Naive thymus-derived CD8-positive, alpha-beta T cell (primary cell): ENCODE measurements at regions of chr10 and their contacts with region 1.

Region 1: GRCh38 chr10:3785257-3785850 is 345 bp upstream of the KLF6 start:
- DNase-seq: peak; percentile 98 to 100 (median 100)
- ATAC-seq: peak; percentile 67 to 76
- H3K4me3 Mint-ChIP-seq: peak overlapping the region; percentile 84 to 100 (median 95)
- H3K27ac Mint-ChIP-seq: peak overlapping the region; percentile 94 to 99 (median 98)
- H3K4me1 Mint-ChIP-seq: peaks cover 28 to 50% (median 31%) of the 10 kb centered on the region in 4 donors
- H3K27me3 Mint-ChIP-seq: no peaks in the 10 kb centered on the region

Region 2: GRCh38 chr10:3750006-3750816 is 35.1 kb before region 1 on chr10:
- POLR2A ChIA-PET with region 1: no interaction called
- DNase-seq: no peak
- ATAC-seq: no peak
- H3K4me3 Mint-ChIP-seq: no peak overlapping the region
- H3K27ac Mint-ChIP-seq: no peak overlapping the region
- H3K4me1 Mint-ChIP-seq: peaks cover 0 to 10% (median 2%) of the 10 kb centered on the region in 4 donors
- H3K27me3 Mint-ChIP-seq: peaks cover 0 to 4% (median 0%) of the 10 kb centered on the region in 5 donors

Region 3: GRCh38 chr10:3797750-3798149 is 12.4 kb after region 1 on chr10:
- POLR2A ChIA-PET with region 1: interaction called, 71 read pairs
- DNase-seq: no peak
- ATAC-seq: no peak
- H3K4me3 Mint-ChIP-seq: no peak overlapping the region
- H3K27ac Mint-ChIP-seq: peak overlapping the region in 2 of 10 donors; percentile 38 to 74
- H3K4me1 Mint-ChIP-seq: peaks cover 0 to 17% (median 10%) of the 10 kb centered on the region in 4 donors
- H3K27me3 Mint-ChIP-seq: no peaks in the 10 kb centered on the region

Region 4: DNA sequence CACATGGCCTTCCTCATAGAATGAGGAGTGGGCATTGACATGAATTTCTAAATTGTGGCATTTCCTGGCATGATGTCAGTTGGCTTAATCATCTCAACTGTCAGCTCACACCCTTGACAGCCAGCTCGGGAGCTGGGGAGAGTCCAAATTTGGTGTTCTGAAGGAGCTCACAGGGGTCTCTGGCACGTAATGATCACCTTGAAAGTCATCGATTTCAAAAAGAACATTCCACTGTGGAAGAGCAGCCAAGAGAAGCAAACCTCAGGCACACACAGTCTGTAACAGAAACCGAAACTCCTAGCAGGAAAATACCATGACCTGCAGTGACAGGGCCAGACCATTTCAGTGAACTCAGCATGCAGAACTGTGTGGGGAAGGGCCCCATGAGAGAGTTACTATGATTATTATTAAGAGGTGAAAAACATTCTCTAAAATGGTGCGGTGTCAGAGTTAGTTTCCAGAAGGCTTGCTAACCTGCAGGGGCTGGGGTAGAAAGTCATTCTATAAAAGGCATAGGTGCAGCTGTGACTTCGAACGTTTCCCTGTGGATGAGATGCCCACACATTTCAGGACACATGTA is 26.0 kb after region 1 on chr10:
- POLR2A ChIA-PET with region 1: interaction called, 222 read pairs
- DNase-seq: peak in 1 of 10 donors; percentile 25
- ATAC-seq: peak; percentile 29 to 43
- H3K4me3 Mint-ChIP-seq: peak overlapping the region in 9 of 10 donors; percentile 49 to 79 (median 55)
- H3K27ac Mint-ChIP-seq: peak overlapping the region in 8 of 10 donors; percentile 36 to 92 (median 72)
- H3K4me1 Mint-ChIP-seq: peaks cover 20 to 58% (median 45%) of the 10 kb centered on the region in 4 donors
- H3K27me3 Mint-ChIP-seq: no peaks in the 10 kb centered on the region

Region 5: GRCh38 chr10:3836222-3836820 is 51.0 kb after region 1 on chr10:
- POLR2A ChIA-PET with region 1: interaction called, 48 read pairs
- DNase-seq: no peak
- ATAC-seq: no peak
- H3K4me3 Mint-ChIP-seq: peak overlapping the region in 1 of 10 donors; percentile 12
- H3K27ac Mint-ChIP-seq: peak overlapping the region in 1 of 10 donors; percentile 35
- H3K4me1 Mint-ChIP-seq: peaks cover 0 to 24% (median 0%) of the 10 kb centered on the region in 4 donors
- H3K27me3 Mint-ChIP-seq: peaks cover 0 to 2% (median 0%) of the 10 kb centered on the region in 5 donors

Region 6: DNA sequence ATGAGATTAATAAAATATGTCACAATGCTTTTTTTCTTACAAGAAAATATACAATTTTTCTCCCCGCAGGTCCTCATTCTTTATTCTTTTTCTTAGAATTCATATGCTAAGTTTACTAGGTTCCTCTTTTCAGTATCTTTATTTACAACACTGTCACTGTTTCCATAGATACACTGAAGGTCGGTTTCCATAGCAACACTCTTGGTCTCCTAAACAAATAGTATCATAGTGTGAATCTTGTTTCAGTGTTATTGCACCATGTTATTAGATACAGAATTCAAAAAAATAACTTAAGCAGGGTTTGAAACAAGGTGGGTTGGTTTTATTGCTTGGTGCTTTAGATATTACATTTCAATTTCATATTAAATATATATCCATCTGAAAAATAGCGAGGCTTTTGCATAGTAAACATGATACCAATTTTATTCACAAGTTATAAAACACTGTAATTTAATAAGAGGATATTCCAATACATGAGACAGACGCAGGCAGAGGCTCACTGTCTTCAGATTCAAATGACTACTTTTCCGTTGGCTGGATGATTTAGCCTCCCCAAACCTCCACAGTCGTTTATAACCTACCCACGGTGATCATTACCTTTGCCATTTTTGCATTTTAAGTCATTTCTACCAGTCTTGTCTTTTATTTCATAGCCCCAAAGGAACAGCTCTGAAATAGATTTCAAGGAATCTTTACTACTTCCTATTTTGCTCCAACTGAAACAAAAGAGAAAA is 88.5 kb after region 1 on chr10:
- POLR2A ChIA-PET with region 1: interaction called, 10 read pairs
- DNase-seq: peak in 4 of 10 donors; percentile 39 to 71 (median 62)
- ATAC-seq: peak; percentile 49 to 63
- H3K4me3 Mint-ChIP-seq: peak overlapping the region in 3 of 10 donors; percentile 2 to 57 (median 44)
- H3K27ac Mint-ChIP-seq: peak overlapping the region; percentile 24 to 94 (median 78)
- H3K4me1 Mint-ChIP-seq: peaks cover 25 to 61% (median 36%) of the 10 kb centered on the region in 4 donors
- H3K27me3 Mint-ChIP-seq: no peaks in the 10 kb centered on the region

Region 7: GRCh38 chr10:3961082-3961481 is 175.7 kb after region 1 on chr10:
- POLR2A ChIA-PET with region 1: interaction called, 26 read pairs
- DNase-seq: peak in 8 of 10 donors; percentile 28 to 73 (median 62)
- ATAC-seq: peak; percentile 99 to 100
- H3K4me3 Mint-ChIP-seq: peak overlapping the region in 9 of 10 donors; percentile 15 to 59 (median 52)
- H3K27ac Mint-ChIP-seq: peak overlapping the region; percentile 32 to 88 (median 72)
- H3K4me1 Mint-ChIP-seq: peaks cover 14 to 34% (median 25%) of the 10 kb centered on the region in 4 donors
- H3K27me3 Mint-ChIP-seq: no peaks in the 10 kb centered on the region

Region 8: GRCh38 chr10:3987143-3987974 is 202.0 kb after region 1 on chr10:
- POLR2A ChIA-PET with region 1: no interaction called
- DNase-seq: no peak
- ATAC-seq: no peak
- H3K4me3 Mint-ChIP-seq: no peak overlapping the region
- H3K27ac Mint-ChIP-seq: peak overlapping the region in 1 of 10 donors; percentile 21
- H3K4me1 Mint-ChIP-seq: peaks cover 0 to 5% (median 3%) of the 10 kb centered on the region in 4 donors
- H3K27me3 Mint-ChIP-seq: no peaks in the 10 kb centered on the region

Region 9: GRCh38 chr10:4316161-4316810 is 530.9 kb after region 1 on chr10:
- POLR2A ChIA-PET with region 1: no interaction called
- DNase-seq: no peak
- ATAC-seq: no peak
- H3K4me3 Mint-ChIP-seq: no peak overlapping the region
- H3K27ac Mint-ChIP-seq: no peak overlapping the region
- H3K4me1 Mint-ChIP-seq: no peaks in the 10 kb centered on the region
- H3K27me3 Mint-ChIP-seq: peaks cover 0 to 4% (median 3%) of the 10 kb centered on the region in 5 donors